ENCODE measurements at regions of chrX and their contacts with region 1.

Region 1: DNA sequence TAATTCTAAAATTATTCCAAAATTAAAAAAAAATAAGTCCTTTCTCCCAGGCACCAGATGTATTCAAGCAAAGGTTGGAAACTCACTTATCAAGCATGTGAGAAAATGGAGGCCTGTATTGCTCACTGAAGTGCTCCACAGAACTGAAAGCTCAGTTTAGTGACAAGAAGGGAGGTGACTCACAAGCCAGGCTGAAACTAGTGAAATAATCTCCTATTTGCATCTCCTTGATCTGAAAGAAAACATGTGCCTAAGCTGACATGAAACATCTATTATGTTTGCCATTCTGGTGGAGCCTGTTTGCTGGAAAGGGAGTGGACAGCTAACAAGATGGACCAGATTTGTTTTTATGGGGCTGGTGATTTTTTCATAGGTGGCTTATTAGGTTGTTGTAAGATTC is 54.0 kb upstream of the AMELX start:
- DNase-seq: peak; percentile 50 to 68
- H3K4me3 ChIP-seq: no peak overlapping the region
- H3K4me3 Mint-ChIP-seq: no peak overlapping the region
- H3K27ac Mint-ChIP-seq: no peak overlapping the region
- H3K4me1 ChIP-seq: peaks cover 20% of the 10 kb centered on the region
- H3K4me1 Mint-ChIP-seq: no peaks in the 10 kb centered on the region
- H3K27me3 ChIP-seq: no peaks in the 10 kb centered on the region
- H3K27me3 Mint-ChIP-seq: no peaks in the 10 kb centered on the region
- CTCF ChIP-seq: no peak

Region 2: DNA sequence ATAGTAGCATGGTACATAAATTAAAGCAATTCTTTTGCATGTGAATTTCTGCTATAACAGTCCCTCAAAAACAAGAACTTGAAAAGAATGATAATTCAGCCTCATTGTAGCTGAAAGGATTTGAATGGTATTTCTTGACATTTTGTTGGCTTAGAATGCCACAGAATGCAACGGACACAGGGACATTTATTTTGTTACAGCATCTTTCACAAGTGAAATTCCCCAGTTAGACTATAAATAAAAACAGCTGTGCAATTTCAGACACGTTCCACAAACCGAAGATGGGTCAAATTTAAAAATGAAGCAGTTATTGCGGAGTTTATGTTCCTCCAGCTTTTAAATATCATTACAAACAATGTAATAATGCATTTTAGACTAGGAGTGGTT is 28.8 kb before region 1 on chrX:
- CTCF ChIA-PET with region 1: no interaction called
- POLR2A ChIA-PET with region 1: no interaction called
- intact Hi-C with region 1: loop called (anchors 2 kb)
- DNase-seq: no peak
- H3K4me3 ChIP-seq: no peak overlapping the region
- H3K4me3 Mint-ChIP-seq: no peak overlapping the region
- H3K27ac Mint-ChIP-seq: no peak overlapping the region
- H3K4me1 ChIP-seq: peaks cover 12% of the 10 kb centered on the region
- H3K4me1 Mint-ChIP-seq: peaks cover 11% of the 10 kb centered on the region
- H3K27me3 ChIP-seq: no peaks in the 10 kb centered on the region
- H3K27me3 Mint-ChIP-seq: no peaks in the 10 kb centered on the region
- CTCF ChIP-seq: no peak

Region 3: DNA sequence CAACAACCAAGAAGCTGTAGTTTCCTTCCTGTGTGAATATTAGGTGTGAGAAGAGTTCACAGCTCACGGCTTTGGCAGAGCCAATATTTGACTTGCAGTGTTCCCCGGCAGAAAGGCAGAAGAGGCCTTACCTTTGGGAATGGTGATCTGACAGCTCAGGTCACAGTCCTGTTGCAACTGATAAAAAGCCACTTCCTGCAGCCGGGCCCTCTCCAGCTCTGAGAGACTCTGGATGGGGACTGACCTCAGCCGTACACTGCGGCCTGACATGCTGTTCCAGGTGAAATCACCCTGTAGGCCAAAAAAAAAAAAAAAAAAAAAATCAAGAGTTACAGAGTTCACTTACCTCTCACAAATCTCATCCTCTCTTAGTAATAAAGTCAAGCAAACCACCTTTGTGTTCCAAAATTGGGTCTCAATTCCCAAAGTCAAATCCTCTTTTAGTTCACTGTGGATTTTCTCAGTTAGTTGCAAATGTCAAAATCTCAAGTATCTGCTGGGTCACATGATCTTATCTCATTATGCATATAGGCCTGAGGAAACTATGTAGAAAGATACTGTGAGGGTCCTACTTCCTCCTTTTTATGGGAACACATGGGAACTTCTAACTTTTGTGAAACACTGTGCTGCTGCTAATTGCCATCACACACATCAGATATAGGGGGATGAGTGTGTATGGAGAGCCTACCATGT is 15.3 kb after region 1 on chrX:
- CTCF ChIA-PET with region 1: no interaction called
- POLR2A ChIA-PET with region 1: no interaction called
- intact Hi-C with region 1: loop called (anchors 2 kb)
- DNase-seq: peak in 1 of 2 experiments; percentile 30
- H3K4me3 ChIP-seq: no peak overlapping the region
- H3K4me3 Mint-ChIP-seq: peak overlapping the region; percentile 42
- H3K27ac Mint-ChIP-seq: peak overlapping the region; percentile 35
- H3K4me1 ChIP-seq: peaks cover 25% of the 10 kb centered on the region
- H3K4me1 Mint-ChIP-seq: peaks cover 30% of the 10 kb centered on the region
- H3K27me3 ChIP-seq: no peaks in the 10 kb centered on the region
- H3K27me3 Mint-ChIP-seq: no peaks in the 10 kb centered on the region
- CTCF ChIP-seq: no peak

Region 4: DNA sequence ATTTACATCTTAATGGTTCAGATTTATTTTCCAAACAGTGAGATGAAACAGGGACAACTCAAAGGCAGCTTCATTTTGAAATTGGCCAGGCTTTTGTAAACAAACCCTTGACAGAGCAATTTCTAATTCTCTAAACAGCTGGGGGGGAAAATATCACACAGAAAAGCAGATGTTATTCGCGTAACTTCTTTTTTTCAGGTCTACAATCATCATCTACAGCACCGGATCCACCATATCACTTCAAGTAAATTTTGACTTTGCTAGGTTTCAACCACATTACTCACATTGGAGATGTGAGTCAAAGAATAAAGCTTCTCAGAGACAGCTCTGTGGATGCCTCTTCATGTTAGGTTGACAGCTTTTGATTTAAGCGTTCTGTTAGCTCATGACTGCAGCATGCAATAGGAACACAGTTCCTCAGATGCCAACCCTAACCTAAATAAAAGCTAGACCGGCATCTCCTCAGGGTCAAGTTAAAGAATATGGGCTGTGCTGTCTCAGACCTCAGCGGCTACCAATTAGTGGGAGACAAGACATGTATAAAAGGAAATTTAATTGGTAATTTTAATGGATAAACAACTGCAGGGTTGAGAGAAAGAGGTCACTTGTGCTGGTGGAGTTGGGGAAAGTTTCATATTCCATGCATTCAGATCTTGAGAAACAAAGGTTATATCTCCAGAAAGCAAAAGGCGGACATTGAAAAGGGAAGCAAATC is 80.7 kb after region 1 on chrX:
- CTCF ChIA-PET with region 1: no interaction called
- POLR2A ChIA-PET with region 1: no interaction called
- intact Hi-C with region 1: no loop called
- DNase-seq: no peak
- H3K4me3 ChIP-seq: no peak overlapping the region
- H3K4me3 Mint-ChIP-seq: no peak overlapping the region
- H3K27ac Mint-ChIP-seq: no peak overlapping the region
- H3K4me1 ChIP-seq: no peaks in the 10 kb centered on the region
- H3K4me1 Mint-ChIP-seq: no peaks in the 10 kb centered on the region
- H3K27me3 ChIP-seq: no peaks in the 10 kb centered on the region
- H3K27me3 Mint-ChIP-seq: no peaks in the 10 kb centered on the region
- CTCF ChIP-seq: no peak

Region 5: DNA sequence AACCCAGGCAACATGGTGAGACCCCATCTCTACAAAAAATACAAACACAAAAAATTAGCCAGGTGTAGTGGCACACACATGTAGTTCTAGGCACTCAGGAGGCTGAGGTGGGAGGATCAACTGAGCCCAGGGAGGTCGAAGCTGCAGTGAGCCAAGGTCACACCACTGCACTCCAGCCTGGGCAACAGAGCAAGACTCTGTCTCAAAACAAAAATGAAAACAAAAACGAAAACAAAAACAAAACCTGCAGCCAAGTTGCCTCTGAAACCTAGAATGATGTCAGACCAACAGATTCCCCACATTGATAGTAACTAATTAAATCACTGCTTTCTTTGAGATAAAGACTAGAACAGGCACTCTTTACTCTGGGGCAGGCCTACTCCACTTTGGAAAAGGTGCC is 158.4 kb after region 1 on chrX:
- CTCF ChIA-PET with region 1: no interaction called
- POLR2A ChIA-PET with region 1: no interaction called
- intact Hi-C with region 1: no loop called
- DNase-seq: no peak
- H3K4me3 ChIP-seq: no peak overlapping the region
- H3K4me3 Mint-ChIP-seq: no peak overlapping the region
- H3K27ac Mint-ChIP-seq: no peak overlapping the region
- H3K4me1 ChIP-seq: no peaks in the 10 kb centered on the region
- H3K4me1 Mint-ChIP-seq: no peaks in the 10 kb centered on the region
- H3K27me3 ChIP-seq: no peaks in the 10 kb centered on the region
- H3K27me3 Mint-ChIP-seq: no peaks in the 10 kb centered on the region
- CTCF ChIP-seq: no peak

Region 6: DNA sequence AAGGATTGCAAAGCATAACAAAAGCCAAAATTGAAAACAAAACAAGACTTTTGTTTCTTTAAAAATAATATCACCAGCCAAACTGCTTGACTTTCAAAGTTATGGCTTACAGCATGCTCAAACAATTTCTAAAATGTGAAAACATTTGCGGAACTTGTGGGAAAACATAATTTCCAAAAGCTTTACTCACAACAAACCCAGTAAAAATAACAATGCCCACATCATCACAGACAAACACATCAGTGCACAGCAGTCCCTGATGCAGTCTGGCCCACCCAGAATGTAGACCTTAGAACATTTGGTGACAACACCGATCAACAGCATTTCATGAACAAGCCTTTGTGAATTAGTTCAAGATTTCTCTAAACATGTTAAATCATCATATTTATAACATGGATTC is 327.6 kb after region 1 on chrX:
- CTCF ChIA-PET with region 1: no interaction called
- POLR2A ChIA-PET with region 1: no interaction called
- intact Hi-C with region 1: no loop called
- DNase-seq: no peak
- H3K4me3 ChIP-seq: no peak overlapping the region
- H3K4me3 Mint-ChIP-seq: no peak overlapping the region
- H3K27ac Mint-ChIP-seq: no peak overlapping the region
- H3K4me1 ChIP-seq: no peaks in the 10 kb centered on the region
- H3K4me1 Mint-ChIP-seq: no peaks in the 10 kb centered on the region
- H3K27me3 ChIP-seq: no peaks in the 10 kb centered on the region
- H3K27me3 Mint-ChIP-seq: no peaks in the 10 kb centered on the region
- CTCF ChIP-seq: no peak